ENCODE measurements at regions of chr3 and their contacts with region 1.

Region 1: DNA sequence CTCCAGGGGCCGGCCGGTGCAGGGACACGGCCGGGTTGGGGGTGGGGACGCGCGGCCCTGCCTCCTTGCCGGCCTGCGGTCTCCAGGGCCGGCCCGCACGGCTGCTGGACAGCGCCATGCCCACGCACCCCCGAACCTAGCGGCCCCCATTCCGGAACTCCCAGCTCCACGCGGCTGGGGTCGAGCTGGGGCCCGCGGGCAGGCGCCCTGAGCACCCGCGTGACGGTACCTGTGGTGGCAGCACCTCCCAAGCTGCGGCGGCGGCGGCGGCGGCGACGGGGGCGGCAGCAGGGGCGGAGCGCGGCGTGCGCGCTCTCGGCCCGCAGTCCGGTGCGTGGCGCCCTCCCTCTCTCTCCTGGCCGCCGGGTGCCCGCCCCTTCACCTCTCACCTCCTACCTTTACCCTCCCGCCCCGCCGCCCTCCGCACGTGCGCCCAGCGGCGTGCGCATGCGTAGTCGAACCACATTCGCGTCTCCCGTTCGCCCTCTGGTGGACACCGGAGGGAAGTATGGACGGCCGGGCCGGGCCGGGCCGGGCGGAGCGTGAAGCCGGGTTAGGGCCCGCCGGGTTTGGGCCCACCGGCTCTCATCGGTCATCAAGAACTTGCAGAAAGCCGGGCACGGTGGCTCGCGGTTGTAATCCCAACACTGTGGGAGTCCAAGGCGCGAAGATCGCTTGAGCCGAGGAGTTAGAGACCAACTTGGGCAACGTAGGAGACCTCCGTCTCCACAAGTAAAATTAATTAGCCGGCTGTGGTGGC is at the start of gene SCAP:
- DNase-seq: peak; percentile 75
- H3K4me3 ChIP-seq: peak within 1 kb of the TSS; percentile 69
- H3K27ac ChIP-seq: peak within 1 kb of the TSS; percentile 70
- H3K4me1 ChIP-seq: no peaks in the 10 kb centered on the region
- H3K27me3 ChIP-seq: no peaks in the 10 kb centered on the region
- CTCF ChIP-seq: peak; percentile 72
- total RNA-seq, gene SCAP: 43.4 and 48.2 TPM in 2 replicates

Region 2: DNA sequence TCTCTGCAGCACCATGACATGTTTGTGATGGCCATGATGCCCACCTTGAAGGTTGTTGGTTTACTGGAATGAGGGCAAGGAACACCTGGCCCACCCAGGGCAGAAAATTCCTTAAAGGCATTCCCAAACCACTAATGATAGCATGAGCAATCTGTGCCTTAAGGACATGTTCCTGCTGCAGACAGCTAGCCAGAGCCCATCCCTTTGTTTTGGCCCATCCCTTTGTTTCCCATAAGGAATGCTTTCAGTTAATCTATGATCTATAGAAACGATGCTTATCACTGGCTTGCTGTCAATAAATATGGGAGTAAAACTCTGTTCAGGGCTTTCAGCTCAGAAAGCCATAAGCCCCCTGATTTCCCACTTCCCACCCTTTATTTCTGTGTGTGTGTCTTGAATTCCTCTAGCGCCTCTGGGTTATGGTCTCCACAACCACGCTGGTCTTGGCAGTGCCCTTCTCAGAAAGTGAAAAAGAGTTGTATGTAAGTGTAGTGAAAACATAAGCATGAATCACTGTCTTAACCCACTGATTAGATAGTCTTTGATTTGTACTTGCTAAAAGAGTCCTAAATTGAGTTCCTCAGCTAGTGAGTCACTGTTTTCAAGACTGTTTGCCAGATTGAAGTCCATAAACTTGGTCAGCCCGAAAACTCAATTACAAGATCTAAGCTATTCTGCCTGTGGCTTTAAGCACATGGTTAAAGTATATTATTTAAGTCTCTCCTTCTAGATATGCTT is 1140.8 kb before region 1 on chr3:
- CTCF ChIA-PET with region 1: no interaction called
- POLR2A ChIA-PET with region 1: no interaction called
- intact Hi-C with region 1: no loop called
- DNase-seq: no peak
- H3K4me3 ChIP-seq: no peak overlapping the region
- H3K27ac ChIP-seq: no peak overlapping the region
- H3K4me1 ChIP-seq: no peaks in the 10 kb centered on the region
- H3K27me3 ChIP-seq: no peaks in the 10 kb centered on the region
- CTCF ChIP-seq: no peak

Region 3: GRCh38 chr3:47420511-47421484 is 55.0 kb before region 1 on chr3:
- CTCF ChIA-PET with region 1: interaction called, 3 read pairs
- POLR2A ChIA-PET with region 1: no interaction called
- intact Hi-C with region 1: loop called (anchors 5 kb)
- DNase-seq: peak; percentile 87
- H3K4me3 ChIP-seq: no peak overlapping the region
- H3K27ac ChIP-seq: peak overlapping the region; percentile 59
- H3K4me1 ChIP-seq: no peaks in the 10 kb centered on the region
- H3K27me3 ChIP-seq: no peaks in the 10 kb centered on the region
- CTCF ChIP-seq: peak; percentile 76

Region 4: GRCh38 chr3:47485812-47486211 is 10.1 kb after region 1 on chr3:
- CTCF ChIA-PET with region 1: interaction called, 11 read pairs
- POLR2A ChIA-PET with region 1: no interaction called
- intact Hi-C with region 1: no loop called
- DNase-seq: no peak
- H3K4me3 ChIP-seq: no peak overlapping the region
- H3K27ac ChIP-seq: no peak overlapping the region
- H3K4me1 ChIP-seq: no peaks in the 10 kb centered on the region
- H3K27me3 ChIP-seq: no peaks in the 10 kb centered on the region
- CTCF ChIP-seq: no peak

Region 5: GRCh38 chr3:48119505-48120193 is 643.9 kb after region 1 on chr3:
- CTCF ChIA-PET with region 1: no interaction called
- POLR2A ChIA-PET with region 1: no interaction called
- intact Hi-C with region 1: no loop called
- DNase-seq: no peak
- H3K4me3 ChIP-seq: no peak overlapping the region
- H3K27ac ChIP-seq: no peak overlapping the region
- H3K4me1 ChIP-seq: no peaks in the 10 kb centered on the region
- H3K27me3 ChIP-seq: no peaks in the 10 kb centered on the region
- CTCF ChIP-seq: no peak